ENCODE measurements at regions of chr19 and their contacts with region 1.

Region 1: GRCh38 chr19:56121180-56122167 is at the start of gene ZNF787:
- DNase-seq: peak; percentile 98 to 99
- ATAC-seq: peak; percentile 81 to 91
- H3K4me3 ChIP-seq: peak within 1 kb of the TSS; percentile 88
- H3K27ac ChIP-seq: peak within 1 kb of the TSS; percentile 93 to 95
- H3K4me1 ChIP-seq: peaks cover 19% of the 10 kb centered on the region
- CTCF ChIP-seq: no peak
- EP300 ChIP-seq: no peak
- POLR2A ChIP-seq: peak; percentile 52
- RAD21 ChIP-seq: no peak
- polyA plus RNA-seq, gene ZNF787: 10.7 and 12.5 TPM in 2 replicates

Region 2: GRCh38 chr19:56133858-56134653 is 12.6 kb after region 1 on chr19:
- CTCF ChIA-PET with region 1: interaction called, 3 read pairs
- POLR2A ChIA-PET with region 1: interaction called, 10 read pairs
- DNase-seq: peak in 1 of 2 experiments; percentile 32
- ATAC-seq: peak in 1 of 2 experiments; percentile 48; a peak in 3 of 6 replicates
- H3K4me3 ChIP-seq: no peak overlapping the region
- H3K27ac ChIP-seq: no peak overlapping the region
- H3K4me1 ChIP-seq: peaks cover 13% of the 10 kb centered on the region; the same call in 2 of the 3 replicates
- CTCF ChIP-seq: no peak
- EP300 ChIP-seq: no peak
- POLR2A ChIP-seq: no peak
- RAD21 ChIP-seq: no peak

Region 3: DNA sequence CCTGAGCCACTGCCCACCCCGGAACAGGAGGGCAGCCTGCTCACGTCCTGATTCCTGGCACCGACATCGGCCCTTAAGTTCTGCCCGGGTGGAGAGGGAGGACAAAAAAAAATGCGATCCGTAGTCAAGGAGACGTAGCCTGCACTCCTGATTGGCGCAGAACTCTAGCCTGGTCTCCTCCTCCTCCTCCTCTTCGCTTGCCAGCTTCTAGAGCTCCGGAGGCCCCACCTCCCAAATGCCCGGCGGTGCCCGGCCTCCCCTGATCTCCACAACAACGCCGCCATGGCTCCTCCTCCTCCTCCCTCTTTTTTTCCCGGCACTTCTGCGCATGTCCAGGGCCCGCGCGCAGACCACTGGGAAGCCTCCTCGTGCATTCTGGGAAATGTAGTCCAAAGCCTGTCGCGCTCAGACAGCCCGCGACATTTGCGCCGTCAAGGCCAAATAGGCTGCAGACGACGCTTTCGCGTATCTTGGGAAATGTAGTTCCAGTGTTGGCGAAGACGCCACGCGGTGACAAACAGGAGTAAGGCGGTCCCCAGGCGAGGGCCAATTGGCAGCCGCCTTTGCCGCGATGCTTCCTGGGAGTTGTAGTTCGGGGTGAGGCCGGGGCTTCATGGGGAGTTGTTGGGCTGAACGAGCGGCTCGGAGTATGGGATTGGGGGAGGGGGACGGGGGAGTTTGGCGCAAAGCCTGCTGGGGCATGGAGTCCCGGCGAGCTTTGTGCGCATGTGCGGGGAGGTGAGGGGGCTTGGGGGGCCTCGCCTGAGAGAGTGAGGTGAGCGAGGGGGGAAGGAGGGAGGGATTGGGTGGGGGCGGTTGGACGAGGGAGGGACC is 19.3 kb after region 1 on chr19 and contains the start of gene ZNF444:
- CTCF ChIA-PET with region 1: interaction called, 3 read pairs
- POLR2A ChIA-PET with region 1: interaction called, 28 read pairs
- DNase-seq: peak; percentile 99 to 100
- ATAC-seq: peak; percentile 93 to 98
- H3K4me3 ChIP-seq: peak within 1 kb of the TSS; percentile 54
- H3K27ac ChIP-seq: peak within 1 kb of the TSS; percentile 87 to 88
- H3K4me1 ChIP-seq: peaks cover 22% of the 10 kb centered on the region; the same call in 2 of the 3 replicates
- CTCF ChIP-seq: no peak
- EP300 ChIP-seq: no peak
- POLR2A ChIP-seq: peak; percentile 58
- RAD21 ChIP-seq: no peak
- polyA plus RNA-seq, gene ZNF444: 10.5 and 16.5 TPM in 2 replicates

Region 4: GRCh38 chr19:56217039-56217949 is 95.8 kb after region 1 on chr19:
- CTCF ChIA-PET with region 1: no interaction called
- POLR2A ChIA-PET with region 1: no interaction called
- DNase-seq: no peak
- ATAC-seq: no peak; a peak in 1 of 6 replicates
- H3K4me3 ChIP-seq: no peak overlapping the region
- H3K27ac ChIP-seq: no peak overlapping the region
- H3K4me1 ChIP-seq: no peaks in the 10 kb centered on the region
- CTCF ChIP-seq: no peak
- EP300 ChIP-seq: no peak
- POLR2A ChIP-seq: no peak
- RAD21 ChIP-seq: no peak

Region 5: GRCh38 chr19:56314562-56315077 is 193.1 kb after region 1 on chr19 and contains the start of gene ZSCAN5A:
- CTCF ChIA-PET with region 1: no interaction called
- POLR2A ChIA-PET with region 1: interaction called, 11 read pairs
- DNase-seq: peak; percentile 97 to 98
- ATAC-seq: peak; percentile 87 to 91
- H3K4me3 ChIP-seq: peak within 1 kb of the TSS; percentile 65
- H3K27ac ChIP-seq: peak within 1 kb of the TSS; percentile 92 to 98
- H3K4me1 ChIP-seq: peaks cover 9% of the 10 kb centered on the region; the same call in 1 of the 3 replicates
- CTCF ChIP-seq: no peak
- EP300 ChIP-seq: no peak
- POLR2A ChIP-seq: peak; percentile 62
- RAD21 ChIP-seq: no peak
- polyA plus RNA-seq, gene ZSCAN5A: 13.3 and 16.1 TPM in 2 replicates